ENCODE measurements at regions of chr15 and their contacts with region 1.

Region 1: GRCh38 chr15:64187396-64188191 is 24.8 kb upstream of the PPIB start:
- DNase-seq: no peak
- H3K4me3 Mint-ChIP-seq: no peak overlapping the region
- H3K27ac Mint-ChIP-seq: peak overlapping the region; percentile 76
- H3K4me1 Mint-ChIP-seq: peaks cover 16% of the 10 kb centered on the region
- H3K27me3 Mint-ChIP-seq: no peaks in the 10 kb centered on the region

Region 2: GRCh38 chr15:63729115-63729884 is 458.3 kb before region 1 on chr15:
- CTCF ChIA-PET with region 1: no interaction called
- POLR2A ChIA-PET with region 1: no interaction called
- DNase-seq: no peak
- H3K4me3 Mint-ChIP-seq: no peak overlapping the region
- H3K27ac Mint-ChIP-seq: peak overlapping the region; percentile 31
- H3K4me1 Mint-ChIP-seq: peaks cover 30% of the 10 kb centered on the region
- H3K27me3 Mint-ChIP-seq: no peaks in the 10 kb centered on the region

Region 3: GRCh38 chr15:64137226-64138220 is 50.1 kb before region 1 on chr15:
- CTCF ChIA-PET with region 1: no interaction called
- POLR2A ChIA-PET with region 1: no interaction called
- DNase-seq: no peak
- H3K4me3 Mint-ChIP-seq: no peak overlapping the region
- H3K27ac Mint-ChIP-seq: no peak overlapping the region
- H3K4me1 Mint-ChIP-seq: no peaks in the 10 kb centered on the region
- H3K27me3 Mint-ChIP-seq: no peaks in the 10 kb centered on the region

Region 4: GRCh38 chr15:64209680-64210334 is 22.2 kb after region 1 on chr15:
- CTCF ChIA-PET with region 1: interaction called, 11 read pairs
- POLR2A ChIA-PET with region 1: no interaction called
- DNase-seq: peak; percentile 11
- H3K4me3 Mint-ChIP-seq: no peak overlapping the region
- H3K27ac Mint-ChIP-seq: no peak overlapping the region
- H3K4me1 Mint-ChIP-seq: peaks cover 12% of the 10 kb centered on the region
- H3K27me3 Mint-ChIP-seq: no peaks in the 10 kb centered on the region

Region 5: DNA sequence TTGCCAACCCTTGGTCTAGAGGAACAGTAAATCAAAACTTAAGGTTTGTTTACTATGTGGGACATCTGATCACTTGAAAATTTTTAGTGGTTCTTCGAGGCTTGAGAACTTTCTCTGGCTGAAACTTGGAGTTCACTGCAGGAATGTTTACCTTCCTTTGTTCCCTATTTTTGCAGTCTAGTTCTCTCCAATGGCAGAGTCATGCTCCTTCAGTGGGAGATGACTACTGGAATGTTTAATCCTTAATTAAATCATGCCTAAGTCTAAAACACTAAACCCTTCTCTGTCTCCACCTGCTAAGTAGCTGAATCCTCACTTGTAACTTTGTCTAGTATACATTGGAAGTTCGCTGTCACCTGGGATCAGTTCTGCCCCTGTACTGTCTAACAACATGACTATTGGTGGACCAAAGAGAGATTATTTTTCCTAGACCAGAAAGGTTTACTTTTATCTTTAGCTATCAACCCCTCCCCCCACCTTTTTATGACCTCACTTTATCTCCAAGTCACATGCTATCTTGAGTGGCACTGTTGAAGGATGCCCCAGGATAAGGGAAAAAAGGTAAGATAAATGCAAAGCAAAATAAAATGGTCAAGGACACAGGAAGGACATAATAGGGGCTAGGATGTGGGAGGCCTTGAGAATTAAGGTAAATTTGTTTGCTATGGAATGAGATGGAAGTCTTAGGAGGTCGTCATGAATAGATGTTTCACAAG is 271.6 kb after region 1 on chr15:
- CTCF ChIA-PET with region 1: no interaction called
- POLR2A ChIA-PET with region 1: interaction called, 11 read pairs
- DNase-seq: no peak
- H3K4me3 Mint-ChIP-seq: peak overlapping the region; percentile 85
- H3K27ac Mint-ChIP-seq: peak overlapping the region; percentile 90
- H3K4me1 Mint-ChIP-seq: peaks cover 53% of the 10 kb centered on the region
- H3K27me3 Mint-ChIP-seq: no peaks in the 10 kb centered on the region

Measured in activated CD4-positive, alpha-beta T cell treated with anti-CD3 and anti-CD28 coated beads, Interleukin-2, amount 10 ng/mL, durations not matched to agents 7 days and 5 days (primary cell).